ENCODE measurements at regions of chr17 and their contacts with region 1.

Region 1: GRCh38 chr17:36148559-36149295 is 27.7 kb downstream of the TBC1D3B start:
- DNase-seq: peak; percentile 90
- H3K4me3 Mint-ChIP-seq: no peak overlapping the region
- H3K27ac Mint-ChIP-seq: no peak overlapping the region
- H3K4me1 Mint-ChIP-seq: peaks cover 2% of the 10 kb centered on the region
- H3K27me3 Mint-ChIP-seq: peaks cover 33% of the 10 kb centered on the region

Region 2: DNA sequence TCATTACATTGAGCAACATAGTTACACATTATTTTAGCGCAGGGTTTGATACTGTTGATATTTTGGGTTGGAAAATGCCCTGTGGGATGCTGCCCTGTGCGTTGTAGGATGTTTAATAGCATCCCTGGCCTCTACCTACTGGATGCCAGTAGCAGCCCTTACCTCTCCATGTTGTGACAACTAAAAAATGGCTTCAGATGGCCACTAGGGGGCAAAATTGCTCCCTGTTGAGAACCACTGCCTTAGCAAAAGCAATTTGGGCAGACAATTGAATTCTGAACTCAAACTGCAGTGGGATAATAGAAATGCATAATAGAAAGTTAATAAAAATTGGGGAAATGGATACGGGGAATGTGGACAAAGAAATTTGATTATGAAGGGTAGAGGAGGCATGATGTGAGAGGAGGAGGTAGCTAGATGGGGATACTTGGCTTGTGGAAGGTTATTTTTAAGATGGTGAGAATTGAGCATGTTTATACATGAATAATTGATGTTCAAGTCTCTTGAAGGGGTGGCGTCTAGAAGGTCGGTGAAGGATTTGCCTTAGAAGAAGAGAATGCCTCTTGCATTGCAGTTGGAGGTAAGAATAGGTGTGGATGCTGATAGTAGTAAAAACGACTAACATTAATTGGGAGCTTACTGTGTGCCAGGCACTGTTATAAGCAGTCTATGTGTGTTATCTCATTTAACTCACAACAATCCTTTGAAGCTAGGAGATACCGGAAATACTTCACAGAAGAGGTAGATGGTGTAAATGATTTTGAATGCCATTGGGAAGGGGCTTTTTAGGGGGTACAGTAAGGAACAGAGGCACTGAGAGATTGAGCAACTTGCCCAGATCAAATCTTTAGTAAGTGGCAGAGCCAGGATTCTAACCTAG is 299.0 kb before region 1 on chr17:
- intact Hi-C with region 1: loop called (anchors 1 kb)
- DNase-seq: peak; percentile 89
- H3K4me3 Mint-ChIP-seq: no peak overlapping the region
- H3K27ac Mint-ChIP-seq: no peak overlapping the region
- H3K4me1 Mint-ChIP-seq: peaks cover 10% of the 10 kb centered on the region
- H3K27me3 Mint-ChIP-seq: no peaks in the 10 kb centered on the region

Region 3: GRCh38 chr17:35915153-35915969 is 233.4 kb before region 1 on chr17:
- intact Hi-C with region 1: no loop called
- DNase-seq: no peak
- H3K4me3 Mint-ChIP-seq: no peak overlapping the region
- H3K27ac Mint-ChIP-seq: no peak overlapping the region
- H3K4me1 Mint-ChIP-seq: peaks cover 17% of the 10 kb centered on the region
- H3K27me3 Mint-ChIP-seq: no peaks in the 10 kb centered on the region

Region 4: DNA sequence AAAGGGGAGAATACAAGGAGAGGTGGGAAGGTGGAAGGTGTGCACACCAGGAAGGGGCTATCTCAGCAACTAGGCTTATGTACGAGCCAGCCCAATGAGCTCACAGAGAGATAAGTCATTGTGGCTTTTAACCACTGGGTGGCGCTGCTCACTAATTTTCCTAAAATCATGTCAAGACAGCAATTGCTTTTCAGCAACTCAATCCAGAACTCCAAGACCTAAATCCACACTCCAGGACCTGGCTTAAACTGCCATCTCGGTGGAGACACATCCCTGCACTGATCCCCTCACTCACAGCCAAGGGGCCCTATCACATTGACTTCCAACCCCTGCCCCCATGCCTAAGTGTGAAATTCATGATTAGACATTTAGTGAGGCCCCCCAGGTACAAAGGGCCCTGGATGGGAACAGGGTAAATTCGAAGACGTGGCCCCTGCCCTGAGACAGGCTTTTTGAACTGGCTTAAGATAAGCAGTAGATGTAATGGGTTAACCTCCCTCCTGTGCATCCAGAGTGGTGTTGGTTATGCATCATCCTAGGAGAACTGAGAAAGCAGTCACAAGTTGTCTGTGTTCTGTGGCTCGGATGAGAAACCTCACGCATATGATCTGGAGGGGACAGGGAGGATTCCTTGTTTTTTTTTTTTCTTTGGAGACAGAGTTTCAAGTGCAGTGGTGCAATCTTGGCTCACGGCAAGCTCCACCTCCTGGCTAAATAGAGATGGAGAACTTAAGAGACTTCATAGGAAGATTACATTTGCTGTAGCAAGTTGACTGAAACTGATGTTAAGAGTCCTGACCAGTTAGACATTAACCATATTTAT is 179.0 kb before region 1 on chr17:
- intact Hi-C with region 1: loop called (anchors 1 kb)
- DNase-seq: peak; percentile 92
- H3K4me3 Mint-ChIP-seq: no peak overlapping the region
- H3K27ac Mint-ChIP-seq: no peak overlapping the region
- H3K4me1 Mint-ChIP-seq: peaks cover 5% of the 10 kb centered on the region
- H3K27me3 Mint-ChIP-seq: peaks cover 3% of the 10 kb centered on the region

Measured in activated CD4-positive, alpha-beta T cell treated with anti-CD3 and anti-CD28 coated beads, Interleukin-2, amount 10 ng/mL, durations not matched to agents 24 days and 14 days (primary cell).